ENCODE measurements at regions of chr2 and their contacts with region 1.

Region 1: DNA sequence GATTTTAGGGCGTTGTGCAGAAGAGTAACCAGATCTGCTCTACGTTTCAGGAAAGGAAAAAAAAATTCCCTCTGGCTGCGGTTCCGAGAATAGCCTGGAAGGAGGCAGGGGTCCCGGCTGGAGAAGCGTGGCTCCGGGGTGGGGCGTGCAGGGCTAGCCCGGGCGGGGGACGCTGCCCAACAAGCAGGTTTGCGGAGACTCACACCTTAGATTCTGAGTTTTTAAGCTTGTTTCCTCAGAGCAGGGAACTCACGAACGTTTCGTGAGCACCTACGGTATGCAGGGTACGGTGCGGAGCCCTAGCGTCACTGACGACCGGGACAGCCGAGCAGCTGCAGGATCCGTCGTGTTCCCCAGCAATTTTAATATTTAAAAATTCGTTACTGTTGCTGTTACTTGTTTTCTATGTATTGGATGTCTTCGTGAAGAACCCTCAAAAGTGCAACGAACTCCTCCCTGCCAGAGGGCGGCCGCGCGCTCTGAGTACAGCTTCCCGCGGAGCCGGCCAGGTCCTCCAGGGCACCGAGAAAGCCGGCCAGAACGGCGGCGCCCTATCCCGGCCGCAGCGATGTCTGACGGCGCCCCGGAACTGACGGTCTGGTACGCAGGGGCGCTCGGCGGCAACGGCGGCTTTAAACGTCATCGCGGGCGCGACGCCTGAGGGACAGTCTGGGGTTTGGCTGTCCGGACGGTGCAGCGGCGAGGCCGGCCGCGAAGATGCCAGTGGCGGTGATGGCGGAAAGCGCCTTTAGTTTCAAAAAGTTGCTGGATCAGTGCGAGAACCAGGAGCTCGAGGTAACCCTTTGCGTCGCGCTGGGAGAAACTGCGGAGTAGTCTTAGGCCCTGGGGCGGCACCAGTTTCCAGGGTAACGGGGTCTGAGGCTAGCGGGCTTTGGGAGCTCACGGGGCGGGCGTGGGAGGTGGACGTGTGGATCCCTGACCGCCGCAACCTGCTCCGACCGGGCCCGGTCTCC is at the start of gene COPS8:
- DNase-seq: peak; percentile 95
- ATAC-seq: peak; percentile 99
- H3K4me3 Mint-ChIP-seq: peak within 1 kb of the TSS; percentile 98
- H3K27ac Mint-ChIP-seq: peak within 1 kb of the TSS; percentile 99
- H3K4me1 Mint-ChIP-seq: peaks cover 8% of the 10 kb centered on the region
- H3K27me3 Mint-ChIP-seq: peaks cover 4% of the 10 kb centered on the region; the same call in 1 of the 2 replicates
- CTCF ChIP-seq: no peak
- total RNA-seq, gene COPS8: 51.0 to 65.9 TPM (median 60.1 TPM) in 3 replicates

Region 2: DNA sequence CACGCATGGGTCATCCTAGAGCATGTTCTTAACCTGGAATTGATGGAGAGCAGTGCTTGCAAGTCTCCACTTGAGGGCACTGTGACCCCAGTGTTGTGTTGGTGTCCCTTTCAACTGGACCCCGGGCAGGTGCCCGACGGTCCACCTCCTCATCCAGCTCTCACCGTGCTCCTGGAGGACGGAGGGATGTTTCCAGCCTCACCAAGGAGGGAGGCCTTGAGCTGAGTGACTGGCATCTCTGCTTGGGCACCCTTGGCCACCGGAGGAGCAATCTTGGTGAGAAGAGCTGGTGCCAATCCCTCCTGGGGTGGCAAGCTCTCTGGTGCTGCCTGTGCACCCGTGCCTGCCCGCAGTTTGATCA is 775.9 kb before region 1 on chr2:
- CTCF ChIA-PET with region 1: interaction called, 10 read pairs
- POLR2A ChIA-PET with region 1: no interaction called
- DNase-seq: peak; percentile 71
- ATAC-seq: peak; percentile 86
- H3K4me3 Mint-ChIP-seq: no peak overlapping the region
- H3K27ac Mint-ChIP-seq: no peak overlapping the region
- H3K4me1 Mint-ChIP-seq: peaks cover 26% of the 10 kb centered on the region
- H3K27me3 Mint-ChIP-seq: no peaks in the 10 kb centered on the region
- CTCF ChIP-seq: peak; percentile 61

Region 3: DNA sequence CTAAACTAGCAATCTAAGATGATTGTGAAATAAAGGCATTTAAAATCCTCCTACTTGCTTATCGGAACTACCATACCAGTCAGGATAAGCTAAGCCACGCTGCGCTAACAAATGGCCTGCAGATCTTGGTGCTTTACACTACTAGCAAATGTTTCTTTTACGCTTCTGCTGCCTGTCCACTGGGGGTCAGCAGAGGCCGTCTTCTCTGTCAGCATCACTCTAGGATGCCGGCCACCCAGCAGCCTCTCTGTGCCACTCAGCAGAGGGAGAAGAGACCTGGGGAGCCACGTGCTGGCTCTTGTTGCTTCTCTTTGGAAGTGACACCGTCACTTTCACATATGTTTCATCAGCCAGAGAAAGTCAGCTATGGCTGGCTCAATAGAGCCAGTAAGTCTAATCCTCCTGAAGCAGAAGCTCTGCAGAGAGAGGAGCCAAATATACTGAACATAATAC is 36.7 kb after region 1 on chr2:
- CTCF ChIA-PET with region 1: no interaction called
- POLR2A ChIA-PET with region 1: no interaction called
- DNase-seq: peak; percentile 83
- ATAC-seq: peak; percentile 99
- H3K4me3 Mint-ChIP-seq: no peak overlapping the region
- H3K27ac Mint-ChIP-seq: no peak overlapping the region
- H3K4me1 Mint-ChIP-seq: no peaks in the 10 kb centered on the region
- H3K27me3 Mint-ChIP-seq: peaks cover 16% of the 10 kb centered on the region
- CTCF ChIP-seq: peak; percentile 61

Measured in WTC11 (cell line).